ENCODE measurements at regions of chr12 and their contacts with region 1.

Region 1: GRCh38 chr12:96445691-96446583 is 43.4 kb upstream of the CFAP54 start:
- DNase-seq: peak in 1 of 2 donors; percentile 69
- ATAC-seq: peak; percentile 91 to 97 (median 96)
- H3K4me3 ChIP-seq: peak overlapping the region in 1 of 10 donors; percentile 12
- H3K27ac ChIP-seq: peak overlapping the region; percentile 61 to 93 (median 84)
- H3K4me1 ChIP-seq: peaks cover 0 to 35% (median 16%) of the 10 kb centered on the region in 9 donors
- H3K27me3 ChIP-seq: no peaks in the 10 kb centered on the region
- CTCF ChIP-seq: no peak

Region 2: DNA sequence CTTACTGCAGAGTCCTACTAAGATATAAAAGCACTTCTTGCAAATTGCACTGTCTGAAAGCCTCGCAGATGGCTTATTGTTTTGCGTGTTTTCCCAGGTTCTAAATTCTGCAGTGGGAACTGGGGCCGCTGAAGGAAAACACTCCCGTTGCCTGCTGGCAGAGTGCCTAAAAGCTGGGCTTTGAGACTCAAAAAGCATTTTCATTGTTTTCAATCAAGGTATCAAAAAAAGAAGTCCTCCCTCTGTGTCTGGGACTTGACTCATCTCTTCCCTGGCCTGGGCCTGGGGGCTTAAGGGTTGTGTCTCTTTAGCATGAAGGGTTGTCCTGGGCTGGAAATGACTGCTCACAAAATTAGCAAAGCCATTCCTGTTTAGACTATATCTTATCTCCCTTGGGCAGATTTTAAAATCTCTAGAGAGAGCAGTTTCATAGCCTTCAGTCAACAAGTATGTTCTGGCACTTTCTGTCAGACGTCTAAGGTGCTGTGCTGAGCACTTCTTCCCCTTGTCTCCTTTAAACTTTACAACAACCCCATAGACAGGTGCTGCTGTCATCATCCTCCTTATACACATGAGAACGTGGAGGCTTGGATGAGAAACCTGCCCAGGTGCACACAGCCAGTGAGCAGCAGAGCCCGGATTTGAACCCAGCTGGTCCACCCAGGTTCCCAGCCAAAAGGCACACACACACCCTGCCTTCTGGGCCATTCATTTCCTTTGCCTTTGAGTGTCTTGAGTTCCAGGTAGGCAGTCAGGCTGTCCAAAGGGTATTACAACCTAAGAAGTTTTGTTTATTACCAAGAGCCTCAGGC is 220.7 kb before region 1 on chr12:
- intact Hi-C with region 1: no loop called
- DNase-seq: peak in 1 of 2 donors; percentile 81
- ATAC-seq: peak in 5 of 8 donors; percentile 16 to 51 (median 44)
- H3K4me3 ChIP-seq: no peak overlapping the region
- H3K27ac ChIP-seq: peak overlapping the region in 6 of 10 donors; percentile 13 to 67 (median 52)
- H3K4me1 ChIP-seq: peaks cover 0 to 86% (median 51%) of the 10 kb centered on the region in 9 donors
- H3K27me3 ChIP-seq: no peaks in the 10 kb centered on the region
- CTCF ChIP-seq: no peak

Region 3: GRCh38 chr12:96314723-96315122 is 131.2 kb before region 1 on chr12:
- intact Hi-C with region 1: no loop called
- DNase-seq: no peak
- ATAC-seq: peak in 1 of 8 donors; percentile 55
- H3K4me3 ChIP-seq: no peak overlapping the region
- H3K27ac ChIP-seq: peak overlapping the region in 1 of 10 donors; percentile 24
- H3K4me1 ChIP-seq: peaks cover 0 to 21% (median 8%) of the 10 kb centered on the region in 9 donors
- H3K27me3 ChIP-seq: no peaks in the 10 kb centered on the region
- CTCF ChIP-seq: no peak

Region 4: GRCh38 chr12:96427269-96427729 is 18.6 kb before region 1 on chr12:
- intact Hi-C with region 1: loop called in 1 of 10 experiments (anchors 2 kb)
- DNase-seq: peak; percentile 51 to 80
- ATAC-seq: peak; percentile 80 to 98 (median 90)
- H3K4me3 ChIP-seq: no peak overlapping the region
- H3K27ac ChIP-seq: peak overlapping the region in 9 of 10 donors; percentile 45 to 91 (median 76)
- H3K4me1 ChIP-seq: peaks cover 0 to 38% (median 18%) of the 10 kb centered on the region in 9 donors
- H3K27me3 ChIP-seq: no peaks in the 10 kb centered on the region
- CTCF ChIP-seq: no peak

Measured in heart right ventricle (tissue), 16 donors.